Endothelial cell of umbilical vein (primary cell): ENCODE measurements at regions of chr6 and their contacts with region 1.

Region 1: GRCh38 chr6:13711733-13712598 is at the start of gene RANBP9:
- DNase-seq: peak; percentile 90
- H3K4me3 ChIP-seq: peak within 1 kb of the TSS; percentile 79 to 99 (median 95)
- H3K27ac ChIP-seq: peak within 1 kb of the TSS; percentile 74
- H3K4me1 ChIP-seq: peaks cover 25% of the 10 kb centered on the region
- H3K27me3 ChIP-seq: no peaks in the 10 kb centered on the region
- CTCF ChIP-seq: no peak
- POLR2A ChIP-seq: peak; percentile 75
- total RNA-seq, gene RANBP9: 40.2 and 44.4 TPM in 2 replicates

Region 2: GRCh38 chr6:12957321-12958051 is 754.5 kb before region 1 on chr6:
- CTCF ChIA-PET with region 1: no interaction called
- POLR2A ChIA-PET with region 1: no interaction called
- dilution Hi-C with region 1: no loop called
- intact Hi-C with region 1: loop called (anchors 5 kb)
- DNase-seq: peak; percentile 76
- H3K4me3 ChIP-seq: peak overlapping the region; percentile 18 to 85 (median 50)
- H3K27ac ChIP-seq: peak overlapping the region; percentile 56
- H3K4me1 ChIP-seq: peaks cover 14% of the 10 kb centered on the region
- H3K27me3 ChIP-seq: no peaks in the 10 kb centered on the region
- CTCF ChIP-seq: peak in 1 of 2 donors; percentile 3
- POLR2A ChIP-seq: no peak

Region 3: GRCh38 chr6:13302751-13303667 is 409.0 kb before region 1 on chr6:
- CTCF ChIA-PET with region 1: no interaction called
- POLR2A ChIA-PET with region 1: no interaction called
- dilution Hi-C with region 1: no loop called
- intact Hi-C with region 1: loop called (anchors 10 kb)
- DNase-seq: peak; percentile 93
- H3K4me3 ChIP-seq: peak overlapping the region in 1 of 3 experiments; percentile 15
- H3K27ac ChIP-seq: peak overlapping the region; percentile 86
- H3K4me1 ChIP-seq: peaks cover 36% of the 10 kb centered on the region
- H3K27me3 ChIP-seq: no peaks in the 10 kb centered on the region
- CTCF ChIP-seq: no peak
- POLR2A ChIP-seq: no peak

Region 4: GRCh38 chr6:13624871-13625288 is 87.1 kb before region 1 on chr6:
- CTCF ChIA-PET with region 1: interaction called, 33 read pairs
- POLR2A ChIA-PET with region 1: no interaction called
- dilution Hi-C with region 1: no loop called
- intact Hi-C with region 1: no loop called
- DNase-seq: peak; percentile 40
- H3K4me3 ChIP-seq: no peak overlapping the region
- H3K27ac ChIP-seq: no peak overlapping the region
- H3K4me1 ChIP-seq: no peaks in the 10 kb centered on the region
- H3K27me3 ChIP-seq: no peaks in the 10 kb centered on the region
- CTCF ChIP-seq: peak; percentile 54 to 63
- POLR2A ChIP-seq: peak; percentile 47

Region 5: GRCh38 chr6:13653296-13653695 is 58.7 kb before region 1 on chr6:
- CTCF ChIA-PET with region 1: interaction called, 3 read pairs
- POLR2A ChIA-PET with region 1: no interaction called
- dilution Hi-C with region 1: no loop called
- intact Hi-C with region 1: loop called (anchors 2 kb)
- DNase-seq: peak; percentile 89
- H3K4me3 ChIP-seq: no peak overlapping the region
- H3K27ac ChIP-seq: peak overlapping the region; percentile 21
- H3K4me1 ChIP-seq: peaks cover 14% of the 10 kb centered on the region
- H3K27me3 ChIP-seq: no peaks in the 10 kb centered on the region
- CTCF ChIP-seq: no peak
- POLR2A ChIP-seq: no peak

Region 6: DNA sequence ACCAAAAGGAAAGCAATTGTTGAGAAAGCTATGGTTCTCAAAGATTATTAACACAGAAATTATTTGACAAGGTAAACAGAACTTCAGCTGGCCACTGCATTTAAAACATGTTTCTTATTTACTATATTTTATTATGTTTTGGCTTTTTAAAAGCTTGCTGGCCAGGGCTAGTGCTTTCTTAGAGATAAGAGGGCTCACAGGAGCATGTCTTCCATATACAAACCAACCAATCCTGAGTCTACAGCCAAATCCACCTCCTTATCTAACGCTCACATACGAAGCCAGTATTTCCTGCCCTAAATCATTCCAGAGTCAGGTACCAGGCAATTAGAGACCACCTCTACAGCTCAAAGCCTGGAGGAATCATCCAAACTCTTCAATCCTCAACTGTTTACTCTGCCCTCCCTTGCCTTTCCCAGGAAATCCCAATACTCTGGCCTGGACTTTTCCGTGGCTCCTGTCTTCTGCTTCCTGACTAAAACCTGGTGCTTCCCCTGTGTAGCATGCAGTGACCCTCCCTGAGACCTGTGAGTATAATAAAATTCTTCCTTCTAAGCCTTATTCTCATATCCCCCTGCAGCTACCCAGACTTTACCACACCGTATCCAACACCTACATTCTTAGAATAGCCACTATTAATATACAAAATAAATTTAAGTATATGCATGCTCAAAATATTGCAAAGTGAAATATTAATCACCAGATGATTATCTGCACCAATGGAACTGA is 33.5 kb before region 1 on chr6:
- CTCF ChIA-PET with region 1: interaction called, 3 read pairs
- POLR2A ChIA-PET with region 1: no interaction called
- dilution Hi-C with region 1: no loop called
- intact Hi-C with region 1: loop called (anchors 2 kb)
- DNase-seq: peak; percentile 92
- H3K4me3 ChIP-seq: no peak overlapping the region
- H3K27ac ChIP-seq: peak overlapping the region; percentile 28
- H3K4me1 ChIP-seq: peaks cover 17% of the 10 kb centered on the region
- H3K27me3 ChIP-seq: no peaks in the 10 kb centered on the region
- CTCF ChIP-seq: no peak
- POLR2A ChIP-seq: no peak

Region 7: DNA sequence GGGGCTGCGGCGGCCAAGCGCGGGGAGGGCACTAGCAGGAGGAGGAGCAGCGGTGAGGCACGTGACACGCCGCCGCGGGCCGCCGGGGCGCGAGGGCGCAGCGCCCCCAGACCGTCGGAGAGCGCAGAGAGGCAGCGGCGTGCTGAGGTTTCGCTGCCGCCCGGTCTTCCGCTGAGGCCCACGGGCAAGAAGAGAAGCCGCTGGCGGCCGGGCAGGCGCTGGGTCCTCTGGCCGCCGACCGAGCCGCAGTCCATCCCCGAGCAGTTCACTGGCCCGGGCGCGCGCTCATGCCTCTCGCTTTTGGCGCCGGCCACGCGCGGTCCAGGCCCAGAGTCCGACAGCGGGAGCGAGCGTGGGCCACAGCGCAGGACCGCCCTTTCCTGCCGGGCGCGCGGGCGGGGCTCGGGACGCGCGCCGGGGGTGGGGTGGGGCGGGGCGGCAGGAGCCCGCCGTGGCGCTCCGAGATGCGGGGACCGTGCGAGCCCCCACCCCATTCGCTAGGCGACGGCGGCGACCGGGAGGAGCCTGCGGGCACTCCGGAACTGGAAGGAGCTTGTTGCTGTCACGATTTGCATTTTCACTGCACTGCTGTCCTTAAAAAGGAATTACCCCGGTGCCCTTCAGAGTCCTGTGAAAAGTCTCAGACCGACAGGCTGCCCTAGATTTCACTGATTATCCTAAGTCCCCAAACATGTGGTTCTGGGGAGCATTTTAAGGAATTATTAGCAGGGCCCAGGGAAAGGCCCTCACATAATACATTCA is 102.4 kb after region 1 on chr6 and contains the start of gene MCUR1:
- CTCF ChIA-PET with region 1: no interaction called
- POLR2A ChIA-PET with region 1: no interaction called
- dilution Hi-C with region 1: no loop called
- intact Hi-C with region 1: loop called (anchors 1 kb)
- DNase-seq: peak; percentile 84
- H3K4me3 ChIP-seq: peak within 1 kb of the TSS; percentile 70 to 94 (median 84)
- H3K27ac ChIP-seq: peak within 1 kb of the TSS; percentile 70
- H3K4me1 ChIP-seq: peaks cover 10% of the 10 kb centered on the region
- H3K27me3 ChIP-seq: no peaks in the 10 kb centered on the region
- CTCF ChIP-seq: peak in 1 of 2 donors; percentile 16
- POLR2A ChIP-seq: peak; percentile 75
- total RNA-seq, gene MCUR1: 18.5 and 21.2 TPM in 2 replicates